Calu3 (cell line): ENCODE measurements at regions of chr13 and their contacts with region 1.

Region 1: GRCh38 chr13:97221989-97222700 is at the start of gene MBNL2:
- DNase-seq: peak; percentile 75
- H3K4me3 Mint-ChIP-seq: peak within 1 kb of the TSS; percentile 78
- H3K27ac Mint-ChIP-seq: peak within 1 kb of the TSS; percentile 95
- H3K4me1 Mint-ChIP-seq: peaks cover 26% of the 10 kb centered on the region
- H3K27me3 Mint-ChIP-seq: no peaks in the 10 kb centered on the region
- CTCF ChIP-seq: no peak
- total RNA-seq, gene MBNL2: 29.8 and 37.1 TPM in 2 replicates

Region 2: GRCh38 chr13:97191615-97192014 is 30.5 kb before region 1 on chr13:
- CTCF ChIA-PET with region 1: no interaction called
- intact Hi-C with region 1: no loop called
- DNase-seq: no peak
- H3K4me3 Mint-ChIP-seq: no peak overlapping the region
- H3K27ac Mint-ChIP-seq: no peak overlapping the region
- H3K4me1 Mint-ChIP-seq: peaks cover 37% of the 10 kb centered on the region
- H3K27me3 Mint-ChIP-seq: no peaks in the 10 kb centered on the region
- CTCF ChIP-seq: no peak

Region 3: GRCh38 chr13:97257800-97258799 is 36.0 kb after region 1 on chr13:
- CTCF ChIA-PET with region 1: no interaction called
- intact Hi-C with region 1: loop called (anchors 5 kb)
- DNase-seq: peak; percentile 54
- H3K4me3 Mint-ChIP-seq: peak overlapping the region; percentile 24
- H3K27ac Mint-ChIP-seq: peak overlapping the region; percentile 96
- H3K4me1 Mint-ChIP-seq: peaks cover 38% of the 10 kb centered on the region
- H3K27me3 Mint-ChIP-seq: no peaks in the 10 kb centered on the region
- CTCF ChIP-seq: no peak

Region 4: GRCh38 chr13:97826421-97827012 is 604.4 kb after region 1 on chr13:
- CTCF ChIA-PET with region 1: no interaction called
- intact Hi-C with region 1: no loop called
- DNase-seq: no peak
- H3K4me3 Mint-ChIP-seq: no peak overlapping the region
- H3K27ac Mint-ChIP-seq: no peak overlapping the region
- H3K4me1 Mint-ChIP-seq: no peaks in the 10 kb centered on the region
- H3K27me3 Mint-ChIP-seq: no peaks in the 10 kb centered on the region
- CTCF ChIP-seq: no peak